HCT116 (cell line): ENCODE measurements at regions of chr6 and their contacts with region 1.

Region 1: DNA sequence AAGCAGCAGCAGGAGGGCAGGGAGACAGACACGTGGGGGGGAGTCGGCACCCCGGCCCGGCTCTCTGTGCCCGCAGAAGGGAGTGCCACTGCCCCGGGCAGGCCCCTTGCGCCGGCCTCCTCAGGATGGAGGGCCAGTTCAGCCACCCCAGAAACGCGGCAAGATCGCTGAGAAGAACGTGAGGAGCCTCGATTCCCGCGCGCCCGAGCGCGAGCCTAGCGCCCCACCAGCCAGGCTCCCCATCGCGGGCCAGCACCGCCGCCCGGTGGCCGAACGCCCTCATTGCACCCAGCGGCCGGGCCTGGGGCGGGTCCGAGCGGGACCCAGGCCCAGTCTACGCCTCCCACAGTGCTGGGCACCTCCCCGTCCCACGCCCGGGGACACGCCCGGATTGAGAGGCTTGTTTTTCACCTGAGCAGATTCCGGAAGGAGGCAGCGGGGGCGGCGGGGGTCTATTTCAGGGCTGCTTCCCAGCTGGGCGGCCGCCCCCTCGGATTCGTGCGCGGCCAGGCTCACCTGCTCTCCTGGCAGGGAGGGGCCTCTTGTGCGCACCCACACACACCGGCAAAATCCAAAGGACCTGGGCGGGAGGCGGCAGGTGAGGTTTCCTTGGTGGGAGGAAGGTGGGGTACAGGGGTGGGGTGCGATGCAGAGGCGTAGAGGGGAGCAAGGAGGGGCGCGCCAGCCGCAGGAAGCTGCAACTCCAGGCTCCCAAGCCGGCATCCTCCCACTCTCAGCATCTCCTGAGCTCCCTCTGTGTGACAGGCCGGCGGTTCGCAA is 9.0 kb upstream of the GRM4 start:
- DNase-seq: no peak
- ATAC-seq: peak; percentile 94
- H3K4me3 ChIP-seq: peak overlapping the region; percentile 16 to 36; a peak in 2 of 4 replicates
- H3K27ac ChIP-seq: no peak overlapping the region
- H3K4me1 ChIP-seq: peaks cover 4 to 10% of the 10 kb centered on the region in 2 experiments; a peak in 3 of 4 replicates
- H3K27me3 ChIP-seq: no peaks in the 10 kb centered on the region
- CTCF ChIP-seq: peak; percentile 93 to 95 (median 94)
- POLR2A ChIP-seq: no peak
- RAD21 ChIP-seq: peak; percentile 100

Region 2: DNA sequence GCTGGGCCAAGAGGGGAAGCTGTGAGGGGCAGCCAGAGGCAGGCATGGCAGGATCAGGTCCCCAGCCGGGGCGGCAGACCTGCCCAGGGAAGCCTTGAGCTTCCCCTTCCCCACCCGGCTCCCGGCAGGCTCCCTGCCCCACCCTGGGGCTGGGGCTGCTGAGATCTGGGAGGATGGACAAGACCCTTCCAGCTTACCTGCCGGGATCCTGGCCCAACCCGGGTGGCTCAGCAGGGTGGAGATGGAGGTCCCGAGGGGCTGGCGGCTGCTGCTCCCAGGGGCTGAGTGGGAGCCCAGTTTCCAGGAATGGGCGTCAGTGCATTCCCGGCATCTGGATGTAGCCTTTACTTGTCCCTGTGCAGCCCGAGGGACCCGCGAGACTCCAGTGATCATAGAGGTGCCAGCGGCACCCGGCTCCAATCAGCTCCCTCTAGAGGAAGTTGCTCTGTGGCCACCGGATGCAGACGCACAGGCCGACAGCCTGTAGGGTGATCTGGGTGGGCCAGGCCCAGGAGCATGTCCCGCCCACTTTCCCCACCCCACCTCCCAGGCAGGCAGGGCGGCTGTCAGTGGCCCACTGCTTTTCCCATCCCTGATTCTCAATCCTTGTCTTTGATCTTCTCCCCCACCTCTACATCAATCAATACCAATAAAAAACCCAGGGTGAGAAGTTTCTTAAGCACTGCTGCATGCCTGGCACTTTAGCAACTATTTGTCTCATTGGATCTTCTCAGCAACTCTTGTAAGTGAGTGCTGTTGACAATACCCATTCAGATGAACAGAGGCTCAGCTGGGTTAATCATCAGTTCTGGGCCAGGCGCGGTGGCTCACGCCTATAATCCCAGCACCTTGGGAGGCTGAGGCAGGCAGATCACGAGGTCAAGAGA is 574.8 kb before region 1 on chr6 and contains the start of gene BAK1:
- CTCF ChIA-PET with region 1: no interaction called
- POLR2A ChIA-PET with region 1: no interaction called
- RAD21 ChIA-PET with region 1: no interaction called
- intact Hi-C with region 1: loop called (anchors 10 kb)
- DNase-seq: peak; percentile 83
- ATAC-seq: peak; percentile 96
- H3K4me3 ChIP-seq: peak within 1 kb of the TSS; percentile 90 to 97
- H3K27ac ChIP-seq: peak within 1 kb of the TSS; percentile 75
- H3K4me1 ChIP-seq: peaks cover 16 to 36% of the 10 kb centered on the region in 2 experiments; a peak in 3 of 4 replicates
- H3K27me3 ChIP-seq: no peaks in the 10 kb centered on the region
- CTCF ChIP-seq: peak in 2 of 3 experiments; percentile 33 to 46; a peak in 3 of 6 replicates
- POLR2A ChIP-seq: peak; percentile 54
- RAD21 ChIP-seq: no peak
- total RNA-seq, gene BAK1: 18.9 TPM

Region 3: DNA sequence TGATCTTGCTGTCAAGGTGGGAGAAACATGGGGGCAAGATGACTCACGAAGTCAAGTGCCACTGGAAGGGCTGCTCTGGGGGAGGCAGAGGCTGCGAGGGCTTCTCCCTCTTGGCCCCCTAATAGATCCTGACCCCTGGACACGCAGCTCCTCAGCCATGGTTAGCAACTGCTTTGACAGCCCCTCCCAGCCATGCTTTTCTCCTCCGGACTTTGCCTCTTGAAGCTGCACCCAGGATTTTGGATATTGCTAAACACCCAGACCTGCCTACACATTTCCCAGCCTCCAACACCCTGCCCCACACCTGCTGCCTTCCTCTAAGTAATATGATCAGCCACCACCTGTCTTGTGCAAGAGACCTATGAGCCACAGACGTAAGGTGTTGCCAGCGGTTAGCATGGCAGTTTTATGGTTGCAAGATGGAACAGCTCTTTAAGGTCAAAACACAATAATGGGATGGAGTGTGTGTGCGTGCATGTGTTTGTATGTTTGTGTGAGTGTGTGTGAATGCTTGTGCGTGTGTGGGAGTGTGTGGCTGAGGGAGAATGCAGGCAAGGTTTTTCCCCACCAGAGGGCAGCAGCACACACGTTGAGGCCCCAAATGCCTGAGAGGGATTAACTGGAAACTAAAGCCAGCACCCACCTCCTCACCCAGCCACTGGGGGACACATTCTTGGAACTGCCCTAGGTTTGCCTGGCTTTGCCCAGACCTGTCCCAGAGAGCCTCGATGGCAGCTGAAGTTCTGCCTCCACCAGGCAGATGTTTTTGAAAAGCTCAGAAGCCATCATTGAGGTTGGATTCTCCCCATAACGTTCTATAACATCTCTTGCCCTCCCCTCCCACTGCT is 410.6 kb before region 1 on chr6:
- CTCF ChIA-PET with region 1: interaction called, 8 read pairs
- POLR2A ChIA-PET with region 1: no interaction called
- RAD21 ChIA-PET with region 1: no interaction called
- intact Hi-C with region 1: loop called (anchors 1 kb)
- DNase-seq: peak; percentile 42
- ATAC-seq: peak; percentile 94
- H3K4me3 ChIP-seq: no peak overlapping the region
- H3K27ac ChIP-seq: no peak overlapping the region
- H3K4me1 ChIP-seq: peaks cover 2 to 9% of the 10 kb centered on the region in 2 experiments; a peak in 3 of 4 replicates
- H3K27me3 ChIP-seq: peaks cover 6% of the 10 kb centered on the region; the same call in 1 of the 2 replicates
- CTCF ChIP-seq: peak; percentile 83 to 96 (median 95)
- POLR2A ChIP-seq: no peak
- RAD21 ChIP-seq: peak; percentile 86

Region 4: GRCh38 chr6:33771146-33772081 is 383.4 kb before region 1 on chr6:
- CTCF ChIA-PET with region 1: interaction called, 20 read pairs
- POLR2A ChIA-PET with region 1: no interaction called
- RAD21 ChIA-PET with region 1: no interaction called
- intact Hi-C with region 1: loop called (anchors 1 kb)
- DNase-seq: peak; percentile 19
- ATAC-seq: peak; percentile 80
- H3K4me3 ChIP-seq: no peak overlapping the region
- H3K27ac ChIP-seq: peak overlapping the region; percentile 36
- H3K4me1 ChIP-seq: peaks cover 12 to 27% of the 10 kb centered on the region in 2 experiments
- H3K27me3 ChIP-seq: no peaks in the 10 kb centered on the region
- CTCF ChIP-seq: peak; percentile 80 to 92 (median 86)
- POLR2A ChIP-seq: no peak
- RAD21 ChIP-seq: peak; percentile 88

Region 5: GRCh38 chr6:33967966-33968724 is 186.7 kb before region 1 on chr6:
- CTCF ChIA-PET with region 1: no interaction called
- POLR2A ChIA-PET with region 1: no interaction called
- RAD21 ChIA-PET with region 1: no interaction called
- intact Hi-C with region 1: loop called (anchors 1 kb)
- DNase-seq: peak; percentile 13
- ATAC-seq: peak; percentile 97
- H3K4me3 ChIP-seq: no peak overlapping the region
- H3K27ac ChIP-seq: no peak overlapping the region
- H3K4me1 ChIP-seq: no peaks in the 10 kb centered on the region
- H3K27me3 ChIP-seq: no peaks in the 10 kb centered on the region
- CTCF ChIP-seq: peak; percentile 49 to 72 (median 71); a peak in 5 of 6 replicates
- POLR2A ChIP-seq: no peak
- RAD21 ChIP-seq: peak; percentile 69

Region 6: DNA sequence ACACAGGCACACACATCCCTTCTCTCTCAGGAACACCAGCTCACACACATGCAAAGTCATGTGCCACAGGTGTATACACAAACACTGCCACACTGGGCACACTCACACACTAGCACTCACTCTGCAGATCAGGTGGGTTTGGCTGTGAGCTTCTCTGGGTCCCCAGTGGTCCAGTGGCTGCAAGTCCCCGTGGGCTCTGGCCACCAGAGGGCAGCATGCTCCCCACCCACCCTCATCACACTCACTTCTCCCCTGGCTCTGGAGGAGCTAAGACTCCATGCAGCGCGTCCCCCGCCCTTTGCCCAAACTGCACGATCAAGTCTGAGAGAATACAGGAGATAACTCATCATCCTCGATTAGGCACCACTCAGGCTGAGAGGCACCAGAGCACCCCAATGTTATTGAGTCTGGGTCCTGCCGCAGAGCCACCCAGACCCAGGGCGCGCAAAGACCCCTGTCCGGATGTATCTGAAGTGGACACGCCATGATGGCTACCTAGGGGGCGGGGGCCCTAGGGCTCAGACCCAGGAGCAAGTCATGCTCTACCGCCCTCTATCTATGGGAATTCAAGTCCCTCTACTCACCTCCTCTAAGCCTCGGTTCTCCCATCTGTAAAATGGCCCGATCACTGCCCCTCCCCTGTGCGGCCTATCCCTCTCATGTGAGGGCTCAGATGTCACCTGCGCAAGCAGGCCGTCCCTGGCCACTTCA is 99.5 kb before region 1 on chr6:
- CTCF ChIA-PET with region 1: interaction called, 54 read pairs
- POLR2A ChIA-PET with region 1: interaction called, 5 read pairs
- RAD21 ChIA-PET with region 1: interaction called, 7 to 9 read pairs
- intact Hi-C with region 1: loop called (anchors 1 kb)
- DNase-seq: peak; percentile 55
- ATAC-seq: peak; percentile 77
- H3K4me3 ChIP-seq: no peak overlapping the region
- H3K27ac ChIP-seq: no peak overlapping the region
- H3K4me1 ChIP-seq: peaks cover 8 to 21% of the 10 kb centered on the region in 2 experiments; a peak in 3 of 4 replicates
- H3K27me3 ChIP-seq: no peaks in the 10 kb centered on the region
- CTCF ChIP-seq: peak; percentile 61 to 93 (median 91)
- POLR2A ChIP-seq: no peak
- RAD21 ChIP-seq: peak; percentile 61

Region 7: DNA sequence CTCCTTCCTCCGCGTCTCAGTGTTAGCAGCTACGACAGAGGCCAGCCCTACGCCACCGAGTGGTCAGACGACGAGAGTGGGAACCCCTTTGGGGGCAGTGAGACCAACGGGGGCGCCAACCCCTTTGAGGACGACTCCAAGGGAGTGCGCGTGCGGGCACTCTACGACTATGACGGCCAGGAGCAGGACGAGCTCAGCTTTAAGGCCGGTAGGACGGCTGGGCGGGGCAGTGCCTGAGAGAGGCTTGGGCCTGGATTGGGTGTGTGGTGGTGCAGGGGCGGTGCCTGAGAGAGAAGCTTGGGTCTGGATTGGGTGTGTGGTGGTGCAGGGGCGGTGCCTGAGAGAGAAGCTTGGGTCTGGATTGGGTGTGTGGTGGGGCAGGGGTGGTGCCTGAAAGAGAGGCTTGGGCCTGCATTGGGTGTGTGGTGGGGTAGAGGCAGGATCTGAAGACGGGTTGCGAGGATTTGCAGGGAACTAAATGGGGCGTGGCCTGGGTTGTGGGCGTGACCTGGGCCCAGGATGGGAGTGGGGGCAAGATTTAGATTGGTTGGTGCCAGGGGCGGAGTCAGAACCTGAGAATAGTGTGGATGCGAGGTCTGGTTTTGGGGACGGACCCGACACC is 376.8 kb after region 1 on chr6:
- CTCF ChIA-PET with region 1: no interaction called
- POLR2A ChIA-PET with region 1: no interaction called
- RAD21 ChIA-PET with region 1: no interaction called
- intact Hi-C with region 1: no loop called
- DNase-seq: peak; percentile 19
- ATAC-seq: peak; percentile 46
- H3K4me3 ChIP-seq: no peak overlapping the region
- H3K27ac ChIP-seq: no peak overlapping the region
- H3K4me1 ChIP-seq: peaks cover 11 to 17% of the 10 kb centered on the region in 2 experiments; a peak in 3 of 4 replicates
- H3K27me3 ChIP-seq: no peaks in the 10 kb centered on the region
- CTCF ChIP-seq: no peak
- POLR2A ChIP-seq: no peak
- RAD21 ChIP-seq: no peak